ENCODE measurements at regions of chr22 and their contacts with region 1.

Region 1: DNA sequence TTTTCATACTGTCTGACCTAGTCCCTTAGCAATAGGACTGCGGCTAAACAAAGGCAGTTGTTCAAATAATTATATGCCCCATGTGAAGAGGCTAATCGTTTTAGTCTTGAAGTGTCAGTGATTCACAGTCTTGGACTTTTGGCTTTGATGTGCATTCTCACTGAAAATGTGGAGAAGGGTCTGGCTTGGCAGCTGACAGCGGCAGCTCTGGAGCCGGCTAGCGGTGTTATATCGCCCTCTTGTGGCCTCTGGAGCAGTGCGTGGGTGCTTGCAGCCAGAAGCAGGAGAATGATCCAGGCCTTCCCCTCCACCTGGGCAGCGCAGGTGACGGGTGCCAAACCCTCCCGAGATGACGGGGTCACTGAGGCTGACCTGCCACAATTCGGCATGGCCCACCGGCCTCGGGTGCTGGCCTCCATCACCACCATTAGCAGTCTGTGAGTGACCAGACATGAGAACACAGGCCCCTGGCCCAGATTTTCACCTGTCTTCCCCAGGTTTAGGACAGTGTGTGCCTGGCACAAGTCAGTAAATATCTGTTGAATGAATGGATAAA is 90.3 kb upstream of the PITPNB start:
- DNase-seq: peak; percentile 37 to 61
- ATAC-seq: peak; percentile 43 to 82
- H3K4me3 ChIP-seq: no peak overlapping the region
- H3K27ac ChIP-seq: no peak overlapping the region
- H3K4me1 ChIP-seq: peaks cover 0 to 3% of the 10 kb centered on the region in 2 donors
- H3K27me3 ChIP-seq: no peaks in the 10 kb centered on the region
- CTCF ChIP-seq: peak; percentile 93 to 99 (median 95)
- POLR2A ChIP-seq: no peak

Region 2: DNA sequence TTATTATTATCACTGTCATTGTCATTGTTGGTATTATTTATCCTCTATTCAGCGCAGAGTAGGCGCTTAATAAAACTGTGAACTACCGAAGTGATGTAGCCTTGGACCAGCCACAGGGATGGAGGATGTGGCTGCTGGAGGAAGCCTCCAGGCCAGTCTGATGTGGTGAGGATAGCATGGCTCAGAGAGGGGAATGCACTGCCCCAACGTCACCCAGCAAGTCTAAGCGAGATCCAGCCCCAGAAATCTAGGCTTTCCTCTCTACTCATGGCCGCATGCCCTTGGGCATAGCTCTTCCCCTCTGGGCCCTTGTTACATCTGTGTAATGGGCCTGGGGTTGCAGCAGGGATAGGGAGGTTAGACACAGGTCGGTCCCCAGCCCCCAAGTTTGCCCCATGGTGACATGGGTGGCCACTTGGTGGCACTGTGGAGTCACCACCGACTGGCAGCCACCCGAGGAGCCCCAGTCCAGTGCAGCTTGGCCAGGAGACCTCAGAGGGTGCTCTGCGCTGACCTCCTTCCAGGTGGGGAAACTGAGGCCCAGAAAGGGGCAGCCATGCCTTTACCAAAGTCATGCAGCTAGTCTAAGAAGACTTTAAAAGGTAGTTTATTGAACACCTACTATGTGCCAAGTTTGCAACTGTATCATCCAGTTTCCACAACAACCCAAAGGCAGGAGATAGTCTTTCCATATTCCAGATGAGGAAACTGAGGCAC is 603.5 kb before region 1 on chr22:
- in situ Hi-C with region 1: no loop called
- intact Hi-C with region 1: loop called (anchors 10 kb)
- DNase-seq: peak; percentile 23 to 49
- ATAC-seq: peak; percentile 62 to 91
- H3K4me3 ChIP-seq: no peak overlapping the region
- H3K27ac ChIP-seq: no peak overlapping the region
- H3K4me1 ChIP-seq: no peaks in the 10 kb centered on the region
- H3K27me3 ChIP-seq: peaks cover 0 to 3% (median 0%) of the 10 kb centered on the region in 3 donors
- CTCF ChIP-seq: peak; percentile 50 to 85 (median 79)
- POLR2A ChIP-seq: no peak

Region 3: DNA sequence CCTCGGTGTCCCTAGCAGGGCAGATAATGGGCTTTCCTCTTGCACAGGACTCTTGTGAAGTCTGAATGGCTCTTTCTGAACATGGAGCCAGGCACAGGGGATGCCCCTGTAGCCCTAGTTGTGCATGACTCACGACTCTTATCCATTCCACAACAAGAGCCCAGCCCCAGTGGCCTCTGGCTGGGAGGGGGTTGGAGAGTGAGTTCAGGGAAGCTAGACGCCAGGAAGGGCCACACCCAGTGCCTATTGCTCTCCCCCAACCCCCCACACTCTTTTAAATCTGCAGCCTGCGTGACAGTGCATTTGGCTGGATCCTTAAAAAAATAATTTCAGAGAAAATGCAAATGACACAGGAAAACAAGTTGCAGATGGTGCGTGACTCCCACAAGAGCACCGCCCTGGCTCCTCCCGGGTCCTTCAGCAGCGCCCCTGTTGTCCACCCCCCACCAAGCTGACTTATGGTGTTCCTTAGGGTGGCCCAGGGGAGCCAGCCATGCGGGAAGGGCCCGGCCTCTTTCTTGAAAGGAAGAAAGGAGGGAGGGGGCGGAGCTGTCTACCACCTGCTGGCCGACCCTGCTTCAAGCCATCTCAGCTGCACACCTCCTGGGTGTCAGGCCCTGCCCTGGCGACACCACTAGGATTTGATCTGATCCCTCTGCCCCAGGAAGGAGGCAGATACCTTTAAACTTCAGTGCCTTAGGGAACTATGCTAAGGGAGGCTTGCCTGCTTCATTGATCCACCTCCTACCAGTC is 282.5 kb before region 1 on chr22:
- in situ Hi-C with region 1: no loop called
- intact Hi-C with region 1: loop called (anchors 10 kb)
- DNase-seq: no peak
- ATAC-seq: peak; percentile 16 to 50
- H3K4me3 ChIP-seq: no peak overlapping the region
- H3K27ac ChIP-seq: peak overlapping the region; percentile 29 to 69 (median 58)
- H3K4me1 ChIP-seq: peaks cover 23 to 28% of the 10 kb centered on the region in 2 donors
- H3K27me3 ChIP-seq: no peaks in the 10 kb centered on the region
- CTCF ChIP-seq: no peak
- POLR2A ChIP-seq: no peak

Region 4: GRCh38 chr22:27880778-27881394 is 128.5 kb before region 1 on chr22:
- in situ Hi-C with region 1: loop called (anchors 5 kb)
- intact Hi-C with region 1: loop called (anchors 1 kb)
- DNase-seq: no peak
- ATAC-seq: peak; percentile 81 to 85
- H3K4me3 ChIP-seq: no peak overlapping the region
- H3K27ac ChIP-seq: peak overlapping the region; percentile 26 to 43 (median 38)
- H3K4me1 ChIP-seq: peaks cover 17 to 30% of the 10 kb centered on the region in 2 donors
- H3K27me3 ChIP-seq: no peaks in the 10 kb centered on the region
- CTCF ChIP-seq: peak; percentile 76 to 85 (median 83)
- POLR2A ChIP-seq: no peak

Region 5: GRCh38 chr22:27885977-27886842 is 123.1 kb before region 1 on chr22:
- in situ Hi-C with region 1: loop called (anchors 5 kb)
- intact Hi-C with region 1: loop called (anchors 1 kb)
- DNase-seq: peak in 1 of 2 donors; percentile 23
- ATAC-seq: peak in 1 of 2 donors; percentile 54
- H3K4me3 ChIP-seq: no peak overlapping the region
- H3K27ac ChIP-seq: peak overlapping the region in 3 of 4 donors; percentile 20 to 32 (median 20)
- H3K4me1 ChIP-seq: peaks cover 3 to 17% of the 10 kb centered on the region in 2 donors
- H3K27me3 ChIP-seq: no peaks in the 10 kb centered on the region
- CTCF ChIP-seq: peak; percentile 81 to 90 (median 86)
- POLR2A ChIP-seq: no peak

Region 6: DNA sequence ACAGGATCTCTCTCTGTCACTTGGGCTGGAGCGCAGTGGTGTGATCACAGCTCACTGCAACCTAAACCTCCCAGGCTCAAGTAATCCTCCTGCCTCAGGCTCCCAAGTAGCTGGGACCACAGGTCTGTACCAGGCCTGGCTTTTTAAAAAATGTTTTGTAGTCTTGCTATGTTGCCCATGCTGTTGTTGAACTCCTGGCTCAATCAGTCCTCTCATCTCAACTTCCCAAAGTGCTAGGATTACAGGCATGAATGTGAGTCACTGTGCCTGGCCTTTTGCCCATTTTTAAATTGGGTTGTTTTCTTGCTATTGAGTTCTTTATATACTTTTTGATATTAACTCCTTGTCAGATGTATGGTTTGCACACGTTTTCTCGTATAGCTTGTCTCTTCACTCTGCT is 57.3 kb before region 1 on chr22:
- in situ Hi-C with region 1: no loop called
- intact Hi-C with region 1: no loop called
- DNase-seq: peak in 1 of 2 donors; percentile 3
- ATAC-seq: peak in 1 of 2 donors; percentile 86
- H3K4me3 ChIP-seq: no peak overlapping the region
- H3K27ac ChIP-seq: peak overlapping the region; percentile 25 to 50 (median 34)
- H3K4me1 ChIP-seq: peaks cover 19 to 22% of the 10 kb centered on the region in 2 donors
- H3K27me3 ChIP-seq: no peaks in the 10 kb centered on the region
- CTCF ChIP-seq: no peak
- POLR2A ChIP-seq: no peak

Region 7: DNA sequence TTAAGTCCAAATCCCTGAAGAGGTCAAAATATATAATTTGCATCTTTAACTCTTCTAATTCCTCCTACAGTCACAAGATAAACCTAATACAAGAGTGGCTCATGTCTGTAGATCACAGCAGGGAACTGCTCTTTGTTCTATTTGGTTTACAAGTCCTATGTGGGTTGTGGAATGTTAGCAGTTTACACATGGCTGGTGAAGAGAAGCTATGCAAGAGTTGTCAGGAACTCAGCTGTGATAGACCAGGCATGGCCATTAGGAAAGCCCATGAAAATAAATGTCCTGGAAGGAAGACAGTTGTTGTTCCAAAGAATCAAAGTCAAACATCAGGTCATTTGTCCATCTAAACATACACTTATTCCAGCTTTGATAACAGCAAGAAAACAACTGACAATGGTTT is 222.1 kb after region 1 on chr22:
- in situ Hi-C with region 1: no loop called
- intact Hi-C with region 1: no loop called
- DNase-seq: no peak
- ATAC-seq: no peak
- H3K4me3 ChIP-seq: no peak overlapping the region
- H3K27ac ChIP-seq: no peak overlapping the region
- H3K4me1 ChIP-seq: peaks cover 6 to 14% of the 10 kb centered on the region in 2 donors
- H3K27me3 ChIP-seq: no peaks in the 10 kb centered on the region
- CTCF ChIP-seq: no peak
- POLR2A ChIP-seq: no peak

Measured in gastrocnemius medialis (tissue), 4 donors.